ENCODE measurements at regions of chr16 and their contacts with region 1.

Region 1: DNA sequence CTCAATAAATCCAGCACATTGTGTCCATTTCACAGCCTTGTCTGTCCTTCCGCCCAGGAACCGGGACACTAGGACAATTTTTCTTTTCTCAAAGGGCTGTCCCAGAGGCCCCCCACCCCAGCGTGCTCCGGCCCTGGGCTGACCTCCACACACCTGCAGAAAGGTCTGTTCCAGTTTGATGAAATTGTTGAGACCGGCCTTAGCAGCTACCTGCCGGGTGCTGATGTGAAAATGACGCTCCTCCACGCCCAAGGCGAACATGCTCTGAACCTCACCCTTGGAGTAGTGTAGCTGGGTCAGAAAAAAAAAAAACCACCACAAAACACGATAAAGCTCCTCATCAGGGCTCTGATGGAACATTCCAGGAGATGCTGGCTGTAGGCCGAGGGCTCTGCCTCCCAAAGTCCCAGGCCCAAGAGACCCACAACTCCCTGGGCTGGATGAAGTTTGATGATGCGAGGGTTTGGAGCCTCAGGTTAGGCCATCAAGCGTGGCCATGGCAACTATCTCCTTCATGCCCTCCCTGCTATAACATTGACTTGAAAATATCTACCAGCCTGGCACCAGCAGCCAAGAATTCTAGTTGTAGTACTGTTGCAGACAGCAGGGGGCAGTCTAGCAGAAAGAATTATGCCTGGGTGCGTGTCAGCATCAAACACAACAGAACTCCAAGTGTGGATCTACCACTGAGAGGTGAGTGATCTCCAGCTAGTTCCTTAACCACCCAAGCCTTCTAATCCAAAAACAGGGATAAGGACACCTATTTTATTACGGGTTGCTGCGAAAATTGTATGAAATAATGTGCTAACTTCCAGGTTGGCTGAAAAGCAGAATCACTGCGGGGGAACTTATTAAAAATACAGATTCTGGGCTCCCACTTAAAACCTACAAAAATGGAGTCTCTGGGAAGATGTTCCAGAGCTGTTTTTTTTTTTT is 62.1 kb downstream of the RMI2 start:
- DNase-seq: peak; percentile 74
- H3K4me3 ChIP-seq: no peak overlapping the region
- H3K27ac ChIP-seq: no peak overlapping the region
- H3K4me1 ChIP-seq: no peaks in the 10 kb centered on the region
- H3K27me3 ChIP-seq: no peaks in the 10 kb centered on the region
- CTCF ChIP-seq: peak; percentile 68 to 78
- POLR2A ChIP-seq: no peak

Region 2: GRCh38 chr16:10964039-10964890 is 443.1 kb before region 1 on chr16:
- CTCF ChIA-PET with region 1: interaction called, 10 read pairs
- POLR2A ChIA-PET with region 1: no interaction called
- dilution Hi-C with region 1: no loop called
- intact Hi-C with region 1: loop called (anchors 1 kb)
- DNase-seq: peak; percentile 71
- H3K4me3 ChIP-seq: no peak overlapping the region
- H3K27ac ChIP-seq: no peak overlapping the region
- H3K4me1 ChIP-seq: no peaks in the 10 kb centered on the region
- H3K27me3 ChIP-seq: no peaks in the 10 kb centered on the region
- CTCF ChIP-seq: peak; percentile 92 to 96
- POLR2A ChIP-seq: no peak

Region 3: GRCh38 chr16:11361701-11362451 is 45.4 kb before region 1 on chr16:
- CTCF ChIA-PET with region 1: no interaction called
- POLR2A ChIA-PET with region 1: no interaction called
- dilution Hi-C with region 1: no loop called
- intact Hi-C with region 1: no loop called
- DNase-seq: no peak
- H3K4me3 ChIP-seq: no peak overlapping the region
- H3K27ac ChIP-seq: no peak overlapping the region
- H3K4me1 ChIP-seq: peaks cover 17% of the 10 kb centered on the region
- H3K27me3 ChIP-seq: peaks cover 0 to 4% of the 10 kb centered on the region in 2 experiments
- CTCF ChIP-seq: no peak
- POLR2A ChIP-seq: no peak

Region 4: DNA sequence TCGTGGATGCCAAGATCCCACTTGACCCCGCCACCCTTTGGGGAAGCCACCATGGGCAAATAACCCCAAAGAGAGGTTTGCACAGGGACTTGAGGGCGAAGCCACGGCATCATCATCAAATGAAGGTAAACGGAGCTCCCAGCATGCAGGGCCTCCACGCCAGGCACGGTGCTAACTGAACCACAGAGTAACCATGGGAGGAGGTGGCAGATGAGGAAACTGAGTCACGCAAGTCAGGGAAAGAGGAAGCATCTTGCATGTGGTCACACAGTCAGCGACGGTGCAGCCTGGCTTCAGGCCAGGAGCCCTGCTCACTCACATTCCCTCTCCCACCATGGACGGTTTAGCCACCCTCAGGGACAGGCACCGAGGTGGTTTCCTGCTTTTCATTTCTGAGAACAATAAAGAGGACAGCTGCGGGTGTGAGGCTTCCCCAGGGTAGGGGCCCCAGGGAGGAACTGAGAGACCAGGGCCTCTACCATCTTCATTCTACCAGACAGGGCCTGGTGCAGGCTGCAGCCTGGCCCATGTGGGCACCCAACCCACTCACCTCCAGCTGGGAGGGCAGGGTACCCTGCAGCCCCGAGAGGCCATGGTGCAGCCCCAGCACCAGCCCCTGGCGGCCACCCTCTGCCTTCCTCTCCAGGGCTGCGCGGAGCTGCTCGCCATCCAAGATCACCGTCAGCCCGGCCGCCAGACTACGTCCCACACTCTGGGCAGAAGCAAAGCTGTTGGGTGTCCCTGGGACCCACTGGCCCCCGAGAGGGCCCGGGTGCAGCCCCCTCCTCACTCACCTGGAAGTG is 16.2 kb after region 1 on chr16:
- CTCF ChIA-PET with region 1: interaction called, 18 read pairs
- POLR2A ChIA-PET with region 1: no interaction called
- dilution Hi-C with region 1: no loop called
- intact Hi-C with region 1: no loop called
- DNase-seq: no peak
- H3K4me3 ChIP-seq: no peak overlapping the region
- H3K27ac ChIP-seq: no peak overlapping the region
- H3K4me1 ChIP-seq: peaks cover 3% of the 10 kb centered on the region
- H3K27me3 ChIP-seq: no peaks in the 10 kb centered on the region
- CTCF ChIP-seq: no peak
- POLR2A ChIP-seq: no peak

Region 5: DNA sequence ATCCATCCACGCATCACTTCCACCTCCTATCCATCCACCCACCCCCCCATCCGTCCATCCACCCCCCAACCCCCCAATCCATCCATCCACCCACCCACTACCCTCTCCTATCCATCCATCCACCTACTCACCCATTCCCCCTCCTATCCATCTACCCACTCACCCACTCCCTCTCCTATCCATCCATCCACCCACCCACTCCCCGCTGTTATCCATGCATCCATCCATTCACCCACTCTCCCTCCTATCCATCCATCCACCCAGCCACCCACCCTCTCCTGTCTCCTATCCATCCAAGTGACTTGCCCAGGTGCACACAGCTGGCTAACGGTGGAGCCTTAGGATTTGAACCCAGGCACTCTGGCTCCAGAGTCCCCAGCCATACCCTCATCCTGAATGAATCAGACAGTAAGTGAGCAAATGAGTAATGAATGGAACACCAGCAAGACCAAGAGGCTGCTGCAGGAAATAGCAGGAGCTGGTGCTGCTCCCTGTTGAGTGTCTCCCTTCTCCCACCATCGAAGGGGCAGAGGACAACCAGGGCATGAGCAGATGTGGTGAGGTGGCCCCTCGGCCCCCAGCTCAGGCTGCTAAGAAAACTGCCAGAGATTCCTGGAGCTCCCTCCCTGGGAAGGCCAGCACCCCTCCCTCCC is 116.9 kb after region 1 on chr16:
- CTCF ChIA-PET with region 1: interaction called, 108 read pairs
- POLR2A ChIA-PET with region 1: no interaction called
- dilution Hi-C with region 1: no loop called
- intact Hi-C with region 1: no loop called
- DNase-seq: no peak
- H3K4me3 ChIP-seq: no peak overlapping the region
- H3K27ac ChIP-seq: no peak overlapping the region
- H3K4me1 ChIP-seq: no peaks in the 10 kb centered on the region
- H3K27me3 ChIP-seq: peaks cover 3 to 5% of the 10 kb centered on the region in 2 experiments
- CTCF ChIP-seq: no peak
- POLR2A ChIP-seq: no peak

Region 6: DNA sequence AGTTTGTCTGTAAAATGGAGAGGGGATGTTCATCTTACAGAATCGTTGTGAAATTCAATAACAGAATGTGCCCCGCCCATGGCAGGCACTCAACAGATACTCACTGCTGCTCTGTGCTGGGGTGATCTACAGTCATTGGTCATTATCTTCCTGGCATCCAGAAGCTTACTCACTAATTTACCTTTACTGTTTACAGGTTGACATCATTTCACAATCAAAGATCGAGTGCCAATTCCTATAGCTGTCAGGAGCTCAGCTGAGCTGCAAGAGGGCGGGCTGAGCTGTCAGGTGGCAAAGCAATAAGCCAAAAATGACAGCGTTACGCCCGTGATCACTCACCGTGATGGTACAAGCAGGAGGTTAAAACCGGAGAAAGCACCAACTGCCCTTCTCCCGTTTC is 128.2 kb after region 1 on chr16:
- CTCF ChIA-PET with region 1: interaction called, 108 read pairs
- POLR2A ChIA-PET with region 1: interaction called, 8 read pairs
- dilution Hi-C with region 1: no loop called
- intact Hi-C with region 1: loop called (anchors 1 kb)
- DNase-seq: no peak
- H3K4me3 ChIP-seq: no peak overlapping the region
- H3K27ac ChIP-seq: no peak overlapping the region
- H3K4me1 ChIP-seq: peaks cover 3% of the 10 kb centered on the region
- H3K27me3 ChIP-seq: no peaks in the 10 kb centered on the region
- CTCF ChIP-seq: no peak
- POLR2A ChIP-seq: no peak

Region 7: GRCh38 chr16:11675561-11676511 is 268.5 kb after region 1 on chr16:
- CTCF ChIA-PET with region 1: interaction called, 11 read pairs
- POLR2A ChIA-PET with region 1: no interaction called
- dilution Hi-C with region 1: no loop called
- intact Hi-C with region 1: no loop called
- DNase-seq: no peak
- H3K4me3 ChIP-seq: no peak overlapping the region
- H3K27ac ChIP-seq: no peak overlapping the region
- H3K4me1 ChIP-seq: peaks cover 17% of the 10 kb centered on the region
- H3K27me3 ChIP-seq: no peaks in the 10 kb centered on the region
- CTCF ChIP-seq: no peak
- POLR2A ChIP-seq: no peak

Region 8: GRCh38 chr16:11816103-11816502 is 408.8 kb after region 1 on chr16:
- CTCF ChIA-PET with region 1: interaction called, 11 read pairs
- POLR2A ChIA-PET with region 1: no interaction called
- dilution Hi-C with region 1: no loop called
- intact Hi-C with region 1: loop called (anchors 1 kb)
- DNase-seq: no peak
- H3K4me3 ChIP-seq: no peak overlapping the region
- H3K27ac ChIP-seq: no peak overlapping the region
- H3K4me1 ChIP-seq: no peaks in the 10 kb centered on the region
- H3K27me3 ChIP-seq: no peaks in the 10 kb centered on the region
- CTCF ChIP-seq: no peak
- POLR2A ChIP-seq: no peak

Measured in endothelial cell of umbilical vein (primary cell).